H1 (cell line): ENCODE measurements at regions of chr1 and their contacts with region 1.

Region 1: GRCh38 chr1:169106095-169106920 is at the start of gene ATP1B1:
- DNase-seq: peak; percentile 63 to 95
- H3K4me3 ChIP-seq: peak within 1 kb of the TSS; percentile 76 to 93 (median 83)
- H3K27ac ChIP-seq: peak within 1 kb of the TSS; percentile 83
- H3K4me1 ChIP-seq: peaks cover 16 to 35% (median 23%) of the 10 kb centered on the region in 4 experiments
- H3K27me3 ChIP-seq: no peaks in the 10 kb centered on the region; a peak in 2 of 7 replicates
- CTCF ChIP-seq: no peak
- EP300 ChIP-seq: 0 out of 3 replicates have a peak, but pooled peaks of 1 of the 2 experiments have one; percentile 8
- POLR2A ChIP-seq: peak; percentile 92 to 96
- RAD21 ChIP-seq: no peak; a peak in 1 of 4 replicates
- total RNA-seq, gene ATP1B1: 76.4 and 76.5 TPM in 2 replicates

Region 2: GRCh38 chr1:168991667-168992475 is 114.4 kb before region 1 on chr1:
- CTCF ChIA-PET with region 1: no interaction called
- POLR2A ChIA-PET with region 1: no interaction called
- DNase-seq: no peak
- H3K4me3 ChIP-seq: no peak overlapping the region
- H3K27ac ChIP-seq: no peak overlapping the region
- H3K4me1 ChIP-seq: no peaks in the 10 kb centered on the region
- H3K27me3 ChIP-seq: no peaks in the 10 kb centered on the region
- CTCF ChIP-seq: no peak
- EP300 ChIP-seq: no peak
- POLR2A ChIP-seq: no peak
- RAD21 ChIP-seq: no peak

Region 3: DNA sequence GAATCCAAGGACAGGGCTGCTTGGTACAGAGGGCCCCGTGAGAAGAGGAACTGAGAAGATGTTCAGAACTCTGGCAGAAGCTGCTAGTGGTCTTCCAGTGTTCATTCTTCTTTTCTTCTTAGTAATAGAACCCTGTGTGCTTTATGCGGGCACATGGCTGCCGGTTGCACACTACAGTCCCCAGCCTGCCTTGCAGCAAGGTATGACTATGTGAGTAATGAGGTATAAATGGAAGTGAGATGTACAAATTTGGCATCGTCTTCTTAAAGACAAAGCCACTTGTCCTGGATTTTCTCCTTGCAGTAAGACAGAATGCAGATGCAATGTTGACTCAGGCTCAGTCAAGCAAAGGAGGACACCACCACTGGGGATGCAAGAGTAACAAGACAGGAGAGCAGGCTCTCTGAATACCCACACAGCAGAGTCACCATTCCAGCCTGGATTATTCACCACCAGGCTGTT is 14.8 kb before region 1 on chr1:
- CTCF ChIA-PET with region 1: interaction called, 6 read pairs
- POLR2A ChIA-PET with region 1: interaction called, 20 read pairs
- DNase-seq: no peak
- H3K4me3 ChIP-seq: no peak overlapping the region
- H3K27ac ChIP-seq: no peak overlapping the region
- H3K4me1 ChIP-seq: peaks cover 0 to 3% (median 0%) of the 10 kb centered on the region in 4 experiments; a peak in 1 of 7 replicates
- H3K27me3 ChIP-seq: no peaks in the 10 kb centered on the region
- CTCF ChIP-seq: no peak
- EP300 ChIP-seq: no peak
- POLR2A ChIP-seq: no peak
- RAD21 ChIP-seq: no peak

Region 4: GRCh38 chr1:169133801-169134502 is 27.6 kb after region 1 on chr1:
- CTCF ChIA-PET with region 1: interaction called, 3 read pairs
- POLR2A ChIA-PET with region 1: interaction called, 13 read pairs
- DNase-seq: no peak
- H3K4me3 ChIP-seq: no peak overlapping the region
- H3K27ac ChIP-seq: no peak overlapping the region
- H3K4me1 ChIP-seq: peaks cover 0 to 5% (median 0%) of the 10 kb centered on the region in 4 experiments; a peak in 1 of 7 replicates
- H3K27me3 ChIP-seq: no peaks in the 10 kb centered on the region
- CTCF ChIP-seq: peak in 1 of 3 experiments; percentile 19; a peak in 2 of 4 replicates
- EP300 ChIP-seq: no peak
- POLR2A ChIP-seq: no peak
- RAD21 ChIP-seq: peak; percentile 33 to 41; a peak in 3 of 4 replicates

Region 5: DNA sequence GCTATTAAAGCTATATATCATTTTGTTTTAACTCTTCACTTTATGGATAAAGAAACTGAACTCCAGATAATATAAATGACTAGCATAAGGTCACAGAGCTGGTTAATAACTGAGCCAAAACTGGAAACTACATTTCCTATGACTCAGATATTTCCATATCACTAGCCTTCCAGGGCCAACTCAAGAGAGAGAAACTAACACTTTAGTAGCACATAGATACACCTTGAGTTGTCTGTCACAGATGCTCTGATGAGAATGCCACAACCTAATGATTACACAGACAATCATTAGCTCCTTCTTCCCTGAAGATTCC is 220.6 kb after region 1 on chr1:
- CTCF ChIA-PET with region 1: no interaction called
- POLR2A ChIA-PET with region 1: no interaction called
- DNase-seq: no peak
- H3K4me3 ChIP-seq: no peak overlapping the region
- H3K27ac ChIP-seq: no peak overlapping the region
- H3K4me1 ChIP-seq: peaks cover 0 to 4% (median 2%) of the 10 kb centered on the region in 4 experiments; a peak in 1 of 7 replicates
- H3K27me3 ChIP-seq: peaks cover 0 to 1% (median 0%) of the 10 kb centered on the region in 4 experiments; a peak in 1 of 7 replicates
- CTCF ChIP-seq: no peak
- EP300 ChIP-seq: no peak
- POLR2A ChIP-seq: no peak
- RAD21 ChIP-seq: no peak